HepG2 (cell line): ENCODE measurements at regions of chr9 and their contacts with region 1.

Region 1: GRCh38 chr9:110152704-110153374 is 55.1 kb downstream of the C9orf152 start:
- DNase-seq: peak; percentile 63
- ATAC-seq: peak; percentile 74
- H3K4me3 ChIP-seq: no peak overlapping the region
- H3K27ac ChIP-seq: no peak overlapping the region
- H3K4me1 ChIP-seq: peaks cover 20% of the 10 kb centered on the region
- H3K27me3 ChIP-seq: no peaks in the 10 kb centered on the region
- CTCF ChIP-seq: peak; percentile 87
- EP300 ChIP-seq: no peak
- POLR2A ChIP-seq: no peak
- RAD21 ChIP-seq: peak; percentile 82

Region 2: GRCh38 chr9:109574068-109574882 is 578.6 kb before region 1 on chr9:
- CTCF ChIA-PET with region 1: interaction called, 5 read pairs
- POLR2A ChIA-PET with region 1: no interaction called
- in situ Hi-C with region 1: no loop called
- intact Hi-C with region 1: loop called (anchors 1 kb)
- DNase-seq: peak; percentile 36
- ATAC-seq: peak; percentile 66
- H3K4me3 ChIP-seq: no peak overlapping the region
- H3K27ac ChIP-seq: no peak overlapping the region
- H3K4me1 ChIP-seq: no peaks in the 10 kb centered on the region
- H3K27me3 ChIP-seq: no peaks in the 10 kb centered on the region
- CTCF ChIP-seq: peak; percentile 69
- EP300 ChIP-seq: no peak
- POLR2A ChIP-seq: no peak
- RAD21 ChIP-seq: peak; percentile 46; the same call in 1 of the 2 replicates

Region 3: GRCh38 chr9:109579191-109579948 is 573.5 kb before region 1 on chr9:
- CTCF ChIA-PET with region 1: interaction called, 5 read pairs
- POLR2A ChIA-PET with region 1: no interaction called
- in situ Hi-C with region 1: loop called (anchors 10 kb)
- intact Hi-C with region 1: loop called (anchors 1 kb)
- DNase-seq: no peak
- ATAC-seq: no peak
- H3K4me3 ChIP-seq: no peak overlapping the region
- H3K27ac ChIP-seq: no peak overlapping the region
- H3K4me1 ChIP-seq: no peaks in the 10 kb centered on the region
- H3K27me3 ChIP-seq: no peaks in the 10 kb centered on the region
- CTCF ChIP-seq: no peak
- EP300 ChIP-seq: no peak
- POLR2A ChIP-seq: no peak
- RAD21 ChIP-seq: no peak

Region 4: GRCh38 chr9:109903515-109904138 is 249.2 kb before region 1 on chr9:
- CTCF ChIA-PET with region 1: interaction called, 28 read pairs
- POLR2A ChIA-PET with region 1: no interaction called
- in situ Hi-C with region 1: loop called (anchors 5 kb)
- intact Hi-C with region 1: loop called (anchors 1 kb)
- DNase-seq: peak; percentile 71
- ATAC-seq: peak; percentile 77
- H3K4me3 ChIP-seq: no peak overlapping the region
- H3K27ac ChIP-seq: no peak overlapping the region
- H3K4me1 ChIP-seq: peaks cover 47% of the 10 kb centered on the region
- H3K27me3 ChIP-seq: no peaks in the 10 kb centered on the region; a peak in 1 of 5 replicates
- CTCF ChIP-seq: peak; percentile 89
- EP300 ChIP-seq: no peak
- POLR2A ChIP-seq: no peak
- RAD21 ChIP-seq: peak; percentile 82

Region 5: DNA sequence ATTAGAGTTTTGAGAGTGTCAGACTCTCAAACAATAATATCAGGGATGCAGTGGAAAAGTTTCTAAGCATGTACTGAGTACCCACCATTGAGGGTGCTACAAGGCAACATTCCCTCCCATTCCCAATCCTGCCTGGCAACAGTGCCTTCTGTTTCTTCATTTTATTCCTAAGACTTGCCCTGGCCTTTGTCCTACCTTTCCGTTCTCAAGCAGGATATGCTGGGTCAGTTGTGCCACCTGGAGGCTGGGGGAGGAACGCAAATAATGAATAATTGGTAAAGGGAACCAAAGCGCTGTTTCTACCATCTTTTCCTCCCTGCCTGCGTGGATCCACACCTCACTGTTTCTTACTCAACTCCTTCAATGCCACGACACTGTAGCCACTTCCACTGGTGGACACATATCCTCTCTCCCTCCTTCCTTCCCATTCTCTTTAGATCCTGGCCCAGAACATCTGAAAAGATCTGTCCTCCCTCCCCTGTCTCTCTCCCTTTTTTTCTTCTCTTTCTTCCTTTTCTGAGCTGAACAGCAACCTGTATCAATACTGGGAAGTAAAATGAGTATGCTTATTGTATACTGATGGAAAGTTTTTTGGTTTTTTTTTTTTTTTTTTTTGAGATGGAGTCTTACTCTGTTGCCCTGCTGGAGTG is 94.4 kb before region 1 on chr9:
- CTCF ChIA-PET with region 1: interaction called, 3 read pairs
- POLR2A ChIA-PET with region 1: no interaction called
- in situ Hi-C with region 1: loop called (anchors 5 kb)
- intact Hi-C with region 1: loop called (anchors 1 kb)
- DNase-seq: peak; percentile 53
- ATAC-seq: peak; percentile 90
- H3K4me3 ChIP-seq: no peak overlapping the region
- H3K27ac ChIP-seq: no peak overlapping the region
- H3K4me1 ChIP-seq: peaks cover 19% of the 10 kb centered on the region; the same call in 1 of the 2 replicates
- H3K27me3 ChIP-seq: no peaks in the 10 kb centered on the region
- CTCF ChIP-seq: peak; percentile 92
- EP300 ChIP-seq: no peak
- POLR2A ChIP-seq: no peak
- RAD21 ChIP-seq: peak; percentile 82

Region 6: GRCh38 chr9:110081395-110081794 is 71.4 kb before region 1 on chr9:
- CTCF ChIA-PET with region 1: no interaction called
- POLR2A ChIA-PET with region 1: no interaction called
- in situ Hi-C with region 1: no loop called
- intact Hi-C with region 1: loop called (anchors 5 kb)
- DNase-seq: no peak
- ATAC-seq: no peak
- H3K4me3 ChIP-seq: no peak overlapping the region
- H3K27ac ChIP-seq: no peak overlapping the region
- H3K4me1 ChIP-seq: no peaks in the 10 kb centered on the region
- H3K27me3 ChIP-seq: no peaks in the 10 kb centered on the region
- CTCF ChIP-seq: no peak
- EP300 ChIP-seq: no peak
- POLR2A ChIP-seq: no peak
- RAD21 ChIP-seq: no peak

Region 7: DNA sequence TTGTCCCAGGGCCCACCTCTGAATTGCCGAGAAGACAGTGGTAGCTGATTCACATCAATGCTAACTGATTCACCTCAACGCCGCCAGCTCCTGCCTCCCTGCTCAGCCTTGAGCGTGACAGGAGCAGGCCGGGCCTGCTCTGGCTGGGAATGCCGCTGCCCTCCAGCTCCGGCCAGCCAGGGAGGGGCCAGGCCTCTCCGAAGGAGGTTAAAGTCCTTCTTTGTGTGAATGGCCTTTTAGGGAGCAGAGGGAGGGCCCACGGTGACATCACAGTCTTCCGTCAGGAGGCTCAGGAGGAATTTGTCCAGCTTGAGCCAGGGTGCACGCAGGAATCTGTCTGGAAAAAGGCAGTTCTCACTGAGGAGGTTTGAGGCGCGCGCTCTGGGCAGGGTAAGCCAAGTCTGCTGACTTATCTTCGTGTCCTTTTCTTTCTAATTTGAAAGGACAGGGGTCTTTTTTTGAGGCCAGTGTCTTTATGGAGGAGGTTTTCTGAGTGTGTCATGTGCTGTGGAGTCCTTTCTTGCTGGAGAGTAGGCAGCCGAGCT is 27.6 kb before region 1 on chr9:
- CTCF ChIA-PET with region 1: no interaction called
- POLR2A ChIA-PET with region 1: interaction called, 4 read pairs
- in situ Hi-C with region 1: no loop called
- intact Hi-C with region 1: loop called (anchors 2 kb)
- DNase-seq: peak; percentile 95
- ATAC-seq: peak; percentile 90
- H3K4me3 ChIP-seq: peak overlapping the region; percentile 58 to 82 (median 76)
- H3K27ac ChIP-seq: peak overlapping the region; percentile 74
- H3K4me1 ChIP-seq: peaks cover 59% of the 10 kb centered on the region
- H3K27me3 ChIP-seq: no peaks in the 10 kb centered on the region; a peak in 1 of 5 replicates
- CTCF ChIP-seq: no peak
- EP300 ChIP-seq: peak in 1 of 2 experiments; percentile 52; a peak in 1 of 4 replicates
- POLR2A ChIP-seq: peak; percentile 65 to 84
- RAD21 ChIP-seq: 0 out of 2 replicates have a peak, but pooled peaks have one; percentile 9